PC-9 (cell line): ENCODE measurements at regions of chr7 and their contacts with region 1.

Region 1: DNA sequence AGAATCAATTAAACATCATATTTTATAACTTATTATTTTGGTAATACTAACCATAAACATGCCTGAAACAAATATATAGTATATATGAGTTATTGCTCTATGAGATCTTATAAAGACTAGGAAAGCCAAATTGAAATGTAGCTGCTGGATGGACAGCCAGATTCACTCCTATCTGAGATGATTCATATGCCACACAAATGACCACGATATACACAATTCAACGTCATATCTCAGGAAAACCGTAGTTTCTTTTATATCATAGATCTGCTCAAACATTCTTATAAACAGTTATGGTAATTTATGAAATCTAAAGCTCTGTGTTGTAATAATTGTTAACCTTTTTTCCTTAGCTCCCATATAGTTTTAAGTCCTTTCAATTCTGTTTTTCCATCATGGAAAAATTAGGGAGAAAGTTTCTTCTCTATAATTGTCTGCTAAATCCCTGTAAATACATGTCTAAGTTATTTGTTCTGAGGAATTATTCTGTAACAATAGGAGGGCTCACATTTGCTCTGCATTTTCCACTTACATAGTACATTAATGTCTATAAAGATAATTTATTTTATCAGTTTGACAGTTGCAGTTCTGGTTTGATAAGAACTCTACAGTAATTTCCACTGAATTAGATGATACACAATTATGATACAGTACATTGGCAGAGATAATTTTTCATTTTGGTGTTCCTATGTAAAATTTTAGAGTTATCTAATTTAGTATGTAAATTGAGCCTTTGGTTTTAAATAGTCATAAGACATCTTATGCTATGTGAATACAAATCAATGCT is 42.7 kb downstream of the GNAT3 start:
- DNase-seq: no peak
- H3K4me3 ChIP-seq: no peak overlapping the region
- H3K27ac ChIP-seq: no peak overlapping the region
- H3K4me1 ChIP-seq: no peaks in the 10 kb centered on the region
- H3K27me3 ChIP-seq: no peaks in the 10 kb centered on the region
- CTCF ChIP-seq: no peak

Region 2: GRCh38 chr7:79539161-79539560 is 930.0 kb before region 1 on chr7:
- CTCF ChIA-PET with region 1: no interaction called
- POLR2A ChIA-PET with region 1: no interaction called
- intact Hi-C with region 1: no loop called
- DNase-seq: no peak
- H3K4me3 ChIP-seq: no peak overlapping the region
- H3K27ac ChIP-seq: no peak overlapping the region
- H3K4me1 ChIP-seq: no peaks in the 10 kb centered on the region
- H3K27me3 ChIP-seq: no peaks in the 10 kb centered on the region
- CTCF ChIP-seq: no peak

Region 3: DNA sequence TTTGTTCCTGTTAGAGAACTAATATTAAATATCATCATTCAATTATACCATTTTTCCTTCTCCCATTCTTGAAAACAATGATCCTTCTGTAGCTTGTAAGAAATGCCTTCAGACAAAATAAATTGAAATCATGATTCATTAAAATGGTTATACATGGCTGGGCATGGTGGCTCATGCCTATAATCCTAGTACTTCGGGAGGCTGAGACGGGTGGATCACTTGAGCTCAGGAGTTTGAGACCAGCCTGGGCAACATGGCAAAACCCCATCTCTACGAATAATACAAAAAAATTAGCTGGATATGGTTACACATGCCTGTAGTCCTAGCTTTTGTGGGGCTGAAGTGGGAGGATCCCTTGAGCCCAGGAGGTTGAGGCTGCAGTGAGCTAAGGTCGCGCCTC is 182.3 kb after region 1 on chr7:
- CTCF ChIA-PET with region 1: no interaction called
- POLR2A ChIA-PET with region 1: interaction called, 13 read pairs
- intact Hi-C with region 1: no loop called
- DNase-seq: no peak
- H3K4me3 ChIP-seq: no peak overlapping the region
- H3K27ac ChIP-seq: no peak overlapping the region
- H3K4me1 ChIP-seq: no peaks in the 10 kb centered on the region
- H3K27me3 ChIP-seq: no peaks in the 10 kb centered on the region
- CTCF ChIP-seq: no peak